SK-N-SH (cell line): ENCODE measurements at regions of chr15 and their contacts with region 1.

Region 1: GRCh38 chr15:43204016-43204901 is 16.6 kb downstream of the EPB42 start:
- DNase-seq: peak; percentile 70
- H3K4me3 ChIP-seq: no peak overlapping the region
- H3K27ac ChIP-seq: no peak overlapping the region
- H3K4me1 ChIP-seq: peaks cover 0 to 5% of the 10 kb centered on the region in 2 experiments; a peak in 1 of 4 replicates
- H3K27me3 ChIP-seq: no peaks in the 10 kb centered on the region
- CTCF ChIP-seq: peak; percentile 73
- EP300 ChIP-seq: no peak
- RAD21 ChIP-seq: peak; percentile 52

Region 2: DNA sequence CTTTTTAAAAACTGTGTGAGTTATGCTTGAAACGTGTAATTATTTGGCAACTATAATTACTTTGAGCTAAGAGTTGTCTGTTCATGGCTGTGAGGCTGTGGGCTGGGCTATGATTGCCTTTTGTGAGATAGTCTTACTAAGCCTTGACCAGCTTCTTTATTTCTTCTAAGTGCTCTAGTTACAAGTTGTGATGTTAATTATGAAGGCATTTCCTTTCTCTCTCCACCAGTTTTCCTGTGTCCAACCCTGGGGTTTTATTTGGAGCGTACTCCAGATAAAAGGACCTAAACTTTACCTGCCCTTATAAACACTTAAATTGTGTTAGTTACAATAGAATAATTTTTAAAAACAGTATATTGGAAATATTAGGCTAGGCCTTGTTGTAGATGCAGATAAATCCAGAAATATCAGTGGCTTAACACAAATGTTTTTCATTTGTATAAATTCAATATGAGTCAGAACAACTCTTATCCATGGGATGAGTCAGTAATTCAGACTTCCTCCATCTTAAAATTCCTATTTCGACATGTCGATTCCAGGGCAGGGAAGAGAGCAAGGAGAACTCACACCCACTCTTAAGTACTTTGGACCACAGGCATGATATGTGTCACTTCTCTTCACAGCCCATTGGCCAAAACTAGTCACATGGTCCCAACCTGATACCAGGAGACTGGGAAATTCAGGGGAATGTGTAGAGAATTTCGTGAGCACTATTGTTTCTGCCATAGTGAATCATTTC is 53.9 kb before region 1 on chr15:
- CTCF ChIA-PET with region 1: no interaction called
- POLR2A ChIA-PET with region 1: no interaction called
- DNase-seq: no peak
- H3K4me3 ChIP-seq: no peak overlapping the region
- H3K27ac ChIP-seq: peak overlapping the region; percentile 40 to 79; a peak in 3 of 4 replicates
- H3K4me1 ChIP-seq: peaks cover 0 to 6% of the 10 kb centered on the region in 2 experiments; a peak in 1 of 4 replicates
- H3K27me3 ChIP-seq: no peaks in the 10 kb centered on the region
- CTCF ChIP-seq: no peak
- EP300 ChIP-seq: no peak
- RAD21 ChIP-seq: no peak

Region 3: GRCh38 chr15:43185157-43186017 is 18.9 kb before region 1 on chr15 and contains the start of gene CCNDBP1:
- CTCF ChIA-PET with region 1: interaction called, 33 read pairs
- POLR2A ChIA-PET with region 1: no interaction called
- DNase-seq: peak; percentile 97
- H3K4me3 ChIP-seq: peak within 1 kb of the TSS; percentile 75 to 88
- H3K27ac ChIP-seq: peak within 1 kb of the TSS; percentile 47 to 89
- H3K4me1 ChIP-seq: peaks cover 0 to 10% of the 10 kb centered on the region in 2 experiments; a peak in 3 of 4 replicates
- H3K27me3 ChIP-seq: no peaks in the 10 kb centered on the region
- CTCF ChIP-seq: peak; percentile 59
- EP300 ChIP-seq: no peak
- RAD21 ChIP-seq: no peak
- polyA plus RNA-seq, gene CCNDBP1: 63.6 and 81.7 TPM in 2 replicates

Region 4: DNA sequence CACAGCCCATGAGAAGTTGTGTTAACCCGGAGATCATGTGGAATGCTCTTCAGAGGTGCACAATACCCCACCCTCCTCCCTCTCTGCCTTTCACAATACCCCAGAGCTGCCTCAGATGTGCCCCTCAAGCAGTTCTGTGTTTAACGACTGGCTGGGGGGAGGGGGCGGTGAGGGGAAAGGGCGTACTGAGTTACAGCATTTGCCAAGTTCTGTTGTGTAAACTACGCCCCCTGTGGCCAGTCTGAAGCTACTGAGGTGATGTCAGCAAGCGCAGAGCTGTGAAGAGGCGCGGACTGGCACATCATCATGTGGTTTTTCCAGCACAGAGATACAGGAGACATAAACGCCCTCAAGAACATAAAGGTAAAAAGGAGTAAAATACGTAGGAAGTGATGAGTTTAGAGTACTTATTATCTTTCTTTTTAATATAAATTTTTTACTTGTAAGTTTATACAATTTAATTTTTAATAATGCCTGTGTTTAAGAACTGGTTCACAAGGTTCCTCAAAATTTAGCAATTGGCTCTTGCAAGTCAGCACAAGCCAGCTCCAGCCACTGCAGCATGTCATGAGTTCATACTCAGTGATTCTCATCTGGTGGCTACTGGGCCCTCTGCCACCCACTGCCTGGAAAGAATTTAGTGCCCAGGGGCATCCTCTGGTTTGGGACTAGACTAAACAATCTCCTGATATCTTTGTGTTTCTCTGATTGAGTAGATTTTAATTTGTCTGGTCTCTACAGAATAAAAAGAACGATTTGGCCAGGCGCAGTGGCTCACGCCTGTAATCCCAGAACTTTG is 14.8 kb after region 1 on chr15:
- CTCF ChIA-PET with region 1: interaction called, 25 read pairs
- POLR2A ChIA-PET with region 1: no interaction called
- DNase-seq: peak; percentile 78
- H3K4me3 ChIP-seq: no peak overlapping the region
- H3K27ac ChIP-seq: peak overlapping the region in 1 of 2 experiments; percentile 65; a peak in 1 of 4 replicates
- H3K4me1 ChIP-seq: peaks cover 0 to 15% of the 10 kb centered on the region in 2 experiments; a peak in 1 of 4 replicates
- H3K27me3 ChIP-seq: peaks cover 8% of the 10 kb centered on the region; the same call in 1 of the 2 replicates
- CTCF ChIP-seq: peak; percentile 33; the same call in 1 of the 2 replicates
- EP300 ChIP-seq: peak in 1 of 2 experiments; percentile 36; a peak in 1 of 4 replicates
- RAD21 ChIP-seq: no peak

Region 5: GRCh38 chr15:43268111-43269105 is 64.1 kb after region 1 on chr15:
- CTCF ChIA-PET with region 1: interaction called, 13 read pairs
- POLR2A ChIA-PET with region 1: no interaction called
- DNase-seq: peak; percentile 59
- H3K4me3 ChIP-seq: no peak overlapping the region
- H3K27ac ChIP-seq: no peak overlapping the region
- H3K4me1 ChIP-seq: no peaks in the 10 kb centered on the region
- H3K27me3 ChIP-seq: peaks cover 25% of the 10 kb centered on the region; the same call in 1 of the 2 replicates
- CTCF ChIP-seq: 0 out of 2 replicates have a peak, but pooled peaks have one; percentile 19
- EP300 ChIP-seq: no peak
- RAD21 ChIP-seq: peak; percentile 70